K562 (cell line): ENCODE measurements at regions of chr20 and their contacts with region 1.

Region 1: GRCh38 chr20:48657475-48658470 is 170.0 kb downstream of the PREX1 start:
- DNase-seq: peak; percentile 82 to 86 (median 84)
- ATAC-seq: peak; percentile 92
- H3K4me3 ChIP-seq: no peak overlapping the region
- H3K27ac ChIP-seq: no peak overlapping the region
- H3K4me1 ChIP-seq: peaks cover 0 to 14% of the 10 kb centered on the region in 2 experiments; a peak in 1 of 5 replicates
- H3K27me3 ChIP-seq: no peaks in the 10 kb centered on the region
- CTCF ChIP-seq: peak; percentile 92 to 96 (median 94)
- EP300 ChIP-seq: no peak
- POLR2A ChIP-seq: no peak
- RAD21 ChIP-seq: peak; percentile 92 to 96

Region 2: GRCh38 chr20:48411919-48412907 is 245.6 kb before region 1 on chr20:
- CTCF ChIA-PET with region 1: no interaction called
- POLR2A ChIA-PET with region 1: no interaction called
- in situ Hi-C with region 1: no loop called
- intact Hi-C with region 1: no loop called
- DNase-seq: no peak
- ATAC-seq: no peak
- H3K4me3 ChIP-seq: no peak overlapping the region
- H3K27ac ChIP-seq: no peak overlapping the region
- H3K4me1 ChIP-seq: no peaks in the 10 kb centered on the region
- H3K27me3 ChIP-seq: peaks cover 2 to 9% of the 10 kb centered on the region in 2 experiments; a peak in 2 of 5 replicates
- CTCF ChIP-seq: no peak
- EP300 ChIP-seq: no peak
- POLR2A ChIP-seq: no peak
- RAD21 ChIP-seq: no peak

Region 3: DNA sequence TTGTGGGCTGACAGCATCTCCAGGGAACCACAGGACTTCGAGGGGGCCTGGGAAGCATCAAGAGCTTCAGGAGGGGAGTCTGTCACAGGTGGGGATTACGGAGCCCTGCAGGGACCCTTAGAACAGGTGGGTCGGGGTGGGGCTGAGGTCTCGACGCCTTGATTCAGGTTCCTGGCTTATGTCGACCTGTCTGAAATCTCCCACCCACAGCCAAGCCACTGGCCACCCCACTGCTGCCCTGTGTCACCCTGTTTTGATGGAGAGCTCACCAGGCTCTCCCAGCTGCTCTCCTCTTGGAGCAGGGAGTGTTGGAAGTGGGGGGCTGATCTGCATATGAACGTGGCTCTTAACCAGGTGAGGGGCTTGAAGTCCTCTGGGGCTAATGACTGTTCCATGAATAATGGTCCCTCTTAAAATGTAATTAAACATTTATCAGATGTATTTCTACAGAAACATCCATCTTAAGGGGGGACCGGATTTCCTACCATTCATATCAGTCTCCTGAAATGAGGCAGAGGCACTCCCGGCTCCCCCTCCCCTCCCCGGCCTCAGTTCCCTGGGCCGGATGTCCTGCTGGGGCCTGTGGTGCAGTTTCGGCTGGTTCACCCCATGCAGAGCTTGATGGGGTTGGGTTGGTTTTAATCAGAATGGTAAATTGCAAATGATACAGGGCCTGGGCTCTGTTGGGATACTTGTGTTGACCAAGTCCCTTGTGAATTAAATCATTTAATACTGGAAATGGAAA is 179.6 kb before region 1 on chr20:
- CTCF ChIA-PET with region 1: no interaction called
- POLR2A ChIA-PET with region 1: no interaction called
- in situ Hi-C with region 1: no loop called
- intact Hi-C with region 1: no loop called
- DNase-seq: no peak
- ATAC-seq: no peak
- H3K4me3 ChIP-seq: no peak overlapping the region
- H3K27ac ChIP-seq: no peak overlapping the region
- H3K4me1 ChIP-seq: no peaks in the 10 kb centered on the region
- H3K27me3 ChIP-seq: peaks cover 2 to 49% of the 10 kb centered on the region in 2 experiments; a peak in 3 of 5 replicates
- CTCF ChIP-seq: no peak
- EP300 ChIP-seq: no peak
- POLR2A ChIP-seq: no peak
- RAD21 ChIP-seq: no peak

Region 4: DNA sequence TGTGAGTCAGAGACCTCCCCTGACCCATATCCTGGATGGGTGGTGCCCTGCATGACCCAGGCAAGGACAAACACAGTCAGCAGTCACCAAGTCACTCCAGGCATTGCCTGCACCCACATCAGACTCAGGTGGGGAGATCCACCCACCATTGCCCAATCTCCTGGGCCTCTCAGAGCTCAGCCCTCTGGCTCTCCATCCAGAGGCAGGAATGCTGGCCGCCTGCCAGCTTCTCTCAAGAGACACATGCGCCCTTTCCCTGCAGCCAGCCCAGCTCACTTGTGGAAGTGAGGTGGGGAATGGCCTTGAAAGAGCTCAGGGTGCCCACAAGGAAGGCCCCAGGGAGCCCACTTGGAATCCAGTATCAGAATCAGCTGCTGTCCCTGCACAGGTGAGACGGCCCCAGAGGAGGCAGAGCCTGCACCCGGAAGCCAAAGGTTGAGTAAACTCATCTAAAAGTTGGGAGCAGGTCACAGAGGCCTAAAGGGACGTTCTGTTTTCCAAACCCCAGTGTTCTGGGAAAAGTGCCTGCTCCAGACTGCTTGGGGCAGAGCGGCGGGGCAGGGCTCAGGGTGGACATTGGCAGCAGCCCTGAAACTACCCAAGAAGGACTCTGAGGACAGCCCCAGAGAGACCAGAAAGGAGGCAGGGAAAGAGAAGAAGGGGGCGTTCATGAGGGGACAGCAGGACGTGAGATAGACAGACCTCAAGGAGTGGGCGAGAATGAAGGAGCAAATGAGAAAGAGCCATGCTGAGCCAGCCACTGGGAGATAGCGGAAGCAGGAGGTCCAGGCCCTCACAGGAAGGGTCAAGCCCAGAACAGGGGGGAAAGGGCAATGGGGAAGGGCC is 40.3 kb after region 1 on chr20:
- CTCF ChIA-PET with region 1: interaction called, 3 read pairs
- POLR2A ChIA-PET with region 1: no interaction called
- in situ Hi-C with region 1: no loop called
- intact Hi-C with region 1: loop called (anchors 2 kb)
- DNase-seq: peak in 3 of 4 experiments; percentile 20 to 25 (median 24)
- ATAC-seq: no peak
- H3K4me3 ChIP-seq: no peak overlapping the region
- H3K27ac ChIP-seq: no peak overlapping the region; the same call in 2 of the 3 replicates
- H3K4me1 ChIP-seq: peaks cover 2 to 6% of the 10 kb centered on the region in 2 experiments; a peak in 2 of 5 replicates
- H3K27me3 ChIP-seq: no peaks in the 10 kb centered on the region; a peak in 1 of 5 replicates
- CTCF ChIP-seq: no peak
- EP300 ChIP-seq: no peak
- POLR2A ChIP-seq: no peak
- RAD21 ChIP-seq: no peak

Region 5: GRCh38 chr20:48776306-48776705 is 118.5 kb after region 1 on chr20:
- CTCF ChIA-PET with region 1: no interaction called
- POLR2A ChIA-PET with region 1: no interaction called
- in situ Hi-C with region 1: no loop called
- intact Hi-C with region 1: no loop called
- DNase-seq: no peak
- ATAC-seq: no peak
- H3K4me3 ChIP-seq: no peak overlapping the region
- H3K27ac ChIP-seq: no peak overlapping the region
- H3K4me1 ChIP-seq: peaks cover under 1 to 8% of the 10 kb centered on the region in 2 experiments; a peak in 3 of 5 replicates
- H3K27me3 ChIP-seq: peaks cover 0 to 7% of the 10 kb centered on the region in 2 experiments; a peak in 1 of 5 replicates
- CTCF ChIP-seq: no peak
- EP300 ChIP-seq: no peak
- POLR2A ChIP-seq: no peak
- RAD21 ChIP-seq: no peak

Region 6: DNA sequence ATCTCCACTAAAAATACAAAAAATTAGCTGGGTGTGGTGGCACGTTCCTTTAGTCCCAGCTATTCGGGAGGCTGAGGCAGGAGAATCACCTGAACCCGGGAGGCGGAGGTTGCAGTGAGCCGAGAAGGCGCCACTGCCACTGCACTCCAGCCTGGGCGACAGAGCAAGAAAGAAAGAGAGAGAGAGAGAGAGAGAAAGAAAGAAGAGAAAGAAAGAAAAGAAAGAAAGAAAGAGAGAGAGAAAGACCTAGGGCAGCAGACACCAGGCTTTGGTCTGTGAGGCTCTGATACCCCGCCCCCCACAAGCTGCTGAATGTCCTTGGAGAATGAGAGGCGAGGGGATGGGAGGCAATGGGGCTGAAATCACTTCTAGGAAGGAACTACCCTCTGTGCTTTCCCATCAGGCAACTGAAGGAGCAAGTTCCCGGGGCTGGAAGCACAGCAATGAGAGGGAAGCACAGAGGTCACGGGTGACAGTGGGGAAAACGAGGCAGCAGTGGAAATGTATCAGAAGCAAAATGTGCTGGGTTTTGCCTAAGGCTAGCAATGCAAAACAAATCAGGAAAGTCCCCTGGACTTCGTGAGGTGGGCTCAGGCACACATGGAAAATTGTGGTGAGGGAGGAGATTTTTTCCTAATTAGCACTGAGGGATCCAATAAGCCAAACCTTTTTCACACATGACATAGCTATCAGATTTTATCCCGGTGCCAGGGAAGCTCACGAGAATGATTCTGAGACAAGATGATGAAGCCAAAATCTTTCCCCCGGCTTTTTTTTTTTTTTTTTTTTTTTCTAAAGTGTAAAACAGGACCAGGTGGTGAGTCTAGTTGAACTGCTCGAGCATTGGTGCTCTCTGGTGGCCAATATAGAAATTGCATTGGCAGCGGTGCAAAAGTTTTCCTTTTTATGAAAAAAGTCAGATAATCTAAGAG is 246.9 kb after region 1 on chr20:
- CTCF ChIA-PET with region 1: interaction called, 111 read pairs
- POLR2A ChIA-PET with region 1: interaction called, 4 read pairs
- in situ Hi-C with region 1: loop called (anchors 5 kb)
- intact Hi-C with region 1: loop called (anchors 1 kb)
- DNase-seq: peak; percentile 68 to 73 (median 70)
- ATAC-seq: peak; percentile 81
- H3K4me3 ChIP-seq: no peak overlapping the region
- H3K27ac ChIP-seq: no peak overlapping the region
- H3K4me1 ChIP-seq: no peaks in the 10 kb centered on the region
- H3K27me3 ChIP-seq: peaks cover 14 to 28% of the 10 kb centered on the region in 2 experiments
- CTCF ChIP-seq: peak; percentile 76 to 91 (median 76)
- EP300 ChIP-seq: no peak
- POLR2A ChIP-seq: no peak
- RAD21 ChIP-seq: peak; percentile 87

Region 7: DNA sequence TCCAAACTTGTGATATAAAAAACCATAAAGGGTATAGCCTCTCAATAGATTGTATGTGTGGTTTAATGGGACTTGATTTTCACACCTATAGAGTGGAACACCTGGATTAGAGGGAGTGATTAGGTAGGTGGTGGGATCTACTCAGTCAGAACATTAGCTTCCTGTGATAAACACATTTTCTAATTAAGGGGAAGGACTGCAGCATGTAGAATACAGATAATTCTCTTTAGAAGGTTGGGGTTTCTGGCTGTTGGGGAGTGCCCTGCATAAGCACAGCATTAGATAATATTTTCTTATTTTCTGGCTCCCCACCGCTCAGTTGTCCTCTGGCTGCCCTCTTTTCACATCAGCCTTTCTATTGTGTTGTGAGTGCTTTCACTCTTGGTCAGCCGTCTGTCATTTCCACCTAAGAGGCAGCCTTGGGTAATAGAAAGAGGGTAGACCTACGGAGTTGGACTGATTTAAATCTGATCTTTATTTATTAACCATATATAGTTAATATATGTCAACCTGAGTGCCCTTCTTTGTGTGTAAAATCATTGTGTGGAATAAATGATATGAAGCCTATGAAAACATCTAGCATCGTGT is 396.4 kb after region 1 on chr20:
- CTCF ChIA-PET with region 1: no interaction called
- POLR2A ChIA-PET with region 1: no interaction called
- in situ Hi-C with region 1: no loop called
- intact Hi-C with region 1: no loop called
- DNase-seq: peak in 1 of 4 experiments; percentile 14
- ATAC-seq: peak; percentile 38
- H3K4me3 ChIP-seq: no peak overlapping the region
- H3K27ac ChIP-seq: peak overlapping the region; percentile 27; the same call in 1 of the 3 replicates
- H3K4me1 ChIP-seq: peaks cover 3 to 7% of the 10 kb centered on the region in 2 experiments; a peak in 2 of 5 replicates
- H3K27me3 ChIP-seq: no peaks in the 10 kb centered on the region
- CTCF ChIP-seq: no peak
- EP300 ChIP-seq: no peak
- POLR2A ChIP-seq: no peak
- RAD21 ChIP-seq: no peak